Ascending aorta (tissue), 2 donors: ENCODE measurements at regions of chr3 and their contacts with region 1.

Region 1: GRCh38 chr3:197002701-197003454 is 26.7 kb downstream of the MELTF start:
- DNase-seq: peak in 1 of 2 donors; percentile 82
- H3K4me3 ChIP-seq: peak overlapping the region; percentile 75 to 77
- H3K27ac ChIP-seq: peak overlapping the region; percentile 90 to 93
- H3K4me1 ChIP-seq: peaks cover 0 to 8% of the 10 kb centered on the region in 2 donors
- H3K27me3 ChIP-seq: no peaks in the 10 kb centered on the region
- CTCF ChIP-seq: peak; percentile 55 to 86 (median 70)

Region 2: GRCh38 chr3:196207833-196208607 is 794.9 kb before region 1 on chr3:
- intact Hi-C with region 1: no loop called
- DNase-seq: no peak
- H3K4me3 ChIP-seq: peak overlapping the region in 1 of 2 donors; percentile 50
- H3K27ac ChIP-seq: no peak overlapping the region
- H3K4me1 ChIP-seq: no peaks in the 10 kb centered on the region
- H3K27me3 ChIP-seq: no peaks in the 10 kb centered on the region
- CTCF ChIP-seq: no peak

Region 3: GRCh38 chr3:197029511-197030167 is 26.8 kb after region 1 on chr3 and contains the start of gene MELTF:
- intact Hi-C with region 1: loop called (anchors 2 kb)
- DNase-seq: no peak
- H3K4me3 ChIP-seq: peak within 1 kb of the TSS; percentile 47 to 71
- H3K27ac ChIP-seq: peak within 1 kb of the TSS in 1 of 2 donors; percentile 27
- H3K4me1 ChIP-seq: peaks cover 8 to 21% of the 10 kb centered on the region in 2 donors
- H3K27me3 ChIP-seq: peaks cover 5% of the 10 kb centered on the region
- CTCF ChIP-seq: peak; percentile 37 to 68 (median 47)
- total RNA-seq, gene MELTF: 21.6 TPM

Region 4: DNA sequence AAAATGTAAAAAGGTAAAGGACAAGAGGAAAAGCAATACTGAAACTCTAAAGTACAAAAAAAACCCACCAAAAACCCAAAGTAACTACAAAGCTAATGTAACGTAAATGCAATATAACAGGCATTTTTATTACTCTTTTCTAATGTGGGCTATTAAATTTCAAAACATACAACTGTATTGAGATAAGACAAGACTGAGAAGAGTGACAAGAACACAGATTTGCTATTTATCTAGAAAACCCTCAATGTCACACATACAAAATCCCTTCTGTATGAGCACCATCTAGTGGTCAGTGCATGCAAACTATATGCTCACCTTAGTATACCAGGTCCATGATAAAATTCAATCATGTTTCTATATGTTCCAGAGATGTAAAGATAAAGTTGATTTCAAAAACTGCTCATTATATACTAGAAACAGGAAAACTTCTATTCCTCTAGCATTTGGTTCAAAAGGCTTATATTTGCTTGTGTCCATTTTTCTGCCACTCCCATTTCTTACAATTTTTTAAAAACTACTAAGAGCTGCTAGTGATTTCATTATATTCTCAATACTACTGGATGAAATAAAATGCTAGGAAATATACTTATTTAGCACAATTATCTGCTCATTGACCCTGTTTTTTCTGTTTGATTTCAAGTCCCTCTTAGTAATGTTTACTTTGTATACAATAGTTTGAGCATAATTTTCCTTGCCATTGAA is 184.2 kb after region 1 on chr3:
- intact Hi-C with region 1: loop called (anchors 2 kb)
- DNase-seq: no peak
- H3K4me3 ChIP-seq: no peak overlapping the region
- H3K27ac ChIP-seq: no peak overlapping the region
- H3K4me1 ChIP-seq: no peaks in the 10 kb centered on the region
- H3K27me3 ChIP-seq: no peaks in the 10 kb centered on the region
- CTCF ChIP-seq: peak; percentile 41 to 72 (median 62)

Region 5: DNA sequence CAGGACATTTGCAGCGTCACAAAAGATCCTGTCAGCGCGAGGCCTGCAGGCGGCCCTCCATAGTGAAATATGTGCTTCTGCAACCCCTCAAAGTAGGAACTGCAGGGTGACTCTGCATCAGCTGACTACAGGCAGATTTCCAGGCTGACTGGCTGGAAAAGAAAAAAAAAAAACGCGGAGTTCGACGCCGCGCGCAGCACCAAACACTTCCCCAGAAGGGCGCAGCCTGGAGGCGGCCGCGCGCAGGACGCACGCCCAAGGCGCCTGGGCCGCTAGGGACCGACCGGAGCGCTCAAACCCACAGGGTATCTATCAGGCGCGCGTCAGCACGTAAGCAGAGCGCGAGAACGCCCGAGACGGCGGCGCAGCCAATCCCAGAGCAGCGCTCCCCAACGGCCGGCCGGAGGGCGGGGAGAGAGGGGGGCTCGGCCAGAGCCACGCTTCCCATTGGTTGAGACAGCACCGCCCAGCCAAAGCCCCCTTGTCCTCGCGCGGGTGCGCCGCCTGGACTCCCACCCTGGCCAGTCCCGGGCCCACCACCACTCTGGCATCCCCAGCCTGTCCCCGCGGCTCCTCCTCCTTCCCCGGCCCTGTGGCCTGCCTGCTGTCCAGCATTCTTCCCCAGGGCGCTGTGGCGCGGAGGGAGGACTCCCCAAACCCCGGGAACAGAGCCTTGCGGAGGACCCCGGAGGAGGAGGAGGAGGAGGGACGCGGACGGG is 551.8 kb after region 1 on chr3:
- intact Hi-C with region 1: no loop called
- DNase-seq: peak; percentile 75 to 97
- H3K4me3 ChIP-seq: peak overlapping the region; percentile 69 to 80
- H3K27ac ChIP-seq: peak overlapping the region; percentile 82 to 93
- H3K4me1 ChIP-seq: peaks cover 0 to 12% of the 10 kb centered on the region in 2 donors
- H3K27me3 ChIP-seq: no peaks in the 10 kb centered on the region
- CTCF ChIP-seq: peak; percentile 41 to 60 (median 47)